ENCODE measurements at regions of chr17 and their contacts with region 1.

Region 1: DNA sequence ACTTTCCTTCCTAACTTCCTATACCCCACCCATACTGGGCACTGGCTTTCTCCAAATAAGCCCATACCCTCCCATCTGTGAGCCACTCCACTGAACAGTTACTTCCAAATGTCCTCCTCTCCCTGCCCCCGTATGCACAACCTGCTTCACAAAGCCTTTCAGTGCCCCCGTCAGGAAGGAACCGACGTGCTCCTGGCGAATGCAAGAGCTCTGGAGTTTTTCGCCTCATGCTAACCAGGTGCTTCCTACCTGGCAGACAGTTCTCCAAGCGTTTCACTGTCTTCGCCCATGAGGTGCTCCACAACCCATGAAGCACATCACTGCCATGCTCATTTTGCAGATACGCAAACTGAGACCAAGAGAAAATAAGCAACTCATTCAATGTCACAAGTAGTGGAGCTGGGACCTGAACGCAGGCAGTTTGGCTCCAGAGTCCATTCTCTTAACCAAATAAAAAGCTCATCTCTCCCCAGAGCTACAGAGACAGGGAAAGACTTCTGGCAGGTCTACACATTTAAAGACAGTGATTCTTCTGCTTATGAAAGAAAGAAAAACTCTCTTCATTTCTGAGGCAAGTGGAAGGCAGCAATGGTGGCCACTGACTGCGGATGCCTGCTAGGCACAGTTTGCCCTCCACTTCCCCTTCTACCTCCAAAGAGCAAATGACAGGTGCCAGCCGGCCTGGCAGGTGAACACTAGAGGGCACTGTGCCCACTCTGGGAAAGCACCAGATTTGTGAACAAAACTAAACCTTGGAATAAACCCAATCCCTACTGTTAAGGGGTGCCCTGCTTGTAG is 23.8 kb downstream of the SPHK1 start:
- DNase-seq: no peak
- H3K4me3 ChIP-seq: no peak overlapping the region
- H3K27ac ChIP-seq: no peak overlapping the region
- H3K27me3 ChIP-seq: no peaks in the 10 kb centered on the region
- CTCF ChIP-seq: peak; percentile 82

Region 2: GRCh38 chr17:76447931-76448652 is 39.8 kb after region 1 on chr17:
- CTCF ChIA-PET with region 1: interaction called, 10 read pairs
- POLR2A ChIA-PET with region 1: no interaction called
- DNase-seq: no peak
- H3K4me3 ChIP-seq: no peak overlapping the region
- H3K27ac ChIP-seq: no peak overlapping the region
- H3K27me3 ChIP-seq: no peaks in the 10 kb centered on the region
- CTCF ChIP-seq: no peak

Region 3: DNA sequence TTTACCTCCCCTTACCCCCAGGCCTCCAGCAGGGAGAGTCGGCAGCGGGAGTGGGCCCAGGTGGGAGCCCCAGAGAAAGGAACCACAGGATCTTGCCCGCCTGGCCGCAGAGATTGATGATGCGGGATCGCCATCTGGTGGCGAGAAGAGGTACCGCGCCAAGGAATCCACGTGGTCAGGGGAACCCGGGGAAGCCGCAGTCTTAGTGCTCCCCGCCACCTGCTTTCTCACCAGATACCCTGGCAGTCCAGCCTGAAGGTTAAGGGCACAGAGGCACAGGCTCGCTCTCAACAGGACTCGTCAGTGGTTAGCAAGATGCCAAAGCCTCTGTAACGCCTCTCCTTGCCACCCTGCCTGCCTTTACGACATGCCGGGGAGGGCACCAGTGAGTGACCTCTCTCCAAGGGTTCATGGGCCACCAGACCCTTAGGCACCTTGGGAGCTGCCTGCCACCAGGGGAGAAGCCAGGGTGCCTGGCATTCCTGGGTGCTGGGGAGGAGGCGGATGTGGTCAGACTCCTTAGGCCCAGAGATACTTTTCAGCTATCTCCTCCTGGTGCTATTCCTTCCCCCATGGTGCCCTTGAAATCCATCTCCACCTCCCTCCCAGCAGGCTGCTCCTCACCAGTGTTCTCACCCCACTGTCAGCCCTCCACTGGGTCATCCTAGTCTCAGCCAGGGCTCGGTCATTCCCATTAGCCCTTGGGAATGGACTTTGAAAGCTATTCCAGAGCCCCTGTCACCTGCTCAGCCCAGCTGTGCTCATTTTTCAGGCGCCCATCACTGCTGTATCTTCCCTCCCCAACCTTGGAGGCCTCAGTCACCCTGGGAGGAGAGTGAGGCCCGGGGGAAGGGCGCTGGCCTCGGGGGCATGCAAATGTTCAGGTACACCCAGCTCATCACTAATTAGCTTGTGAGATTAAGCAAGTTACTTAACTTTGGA is 98.4 kb after region 1 on chr17:
- CTCF ChIA-PET with region 1: interaction called, 13 read pairs
- POLR2A ChIA-PET with region 1: no interaction called
- DNase-seq: no peak
- H3K4me3 ChIP-seq: no peak overlapping the region
- H3K27ac ChIP-seq: no peak overlapping the region
- H3K27me3 ChIP-seq: peaks cover 5% of the 10 kb centered on the region
- CTCF ChIP-seq: peak; percentile 87

Region 4: GRCh38 chr17:76687308-76688164 is 279.3 kb after region 1 on chr17:
- CTCF ChIA-PET with region 1: no interaction called
- POLR2A ChIA-PET with region 1: no interaction called
- DNase-seq: no peak
- H3K4me3 ChIP-seq: no peak overlapping the region
- H3K27ac ChIP-seq: no peak overlapping the region
- H3K27me3 ChIP-seq: no peaks in the 10 kb centered on the region
- CTCF ChIP-seq: no peak